Activated T-helper 2 cell treated with anti-CD3 and anti-CD28 coated beads, Interferon-gamma antibody, Interleukin-2, Interleukin-4, amounts not matched to agents 10 μg/mL and 5 μg/mL and 100 μg/mL, durations not matched to agents 14 hours and 24 hours and 36 hours (primary cell): ENCODE measurements at regions of chr7 and their contacts with region 1.

Region 1: GRCh38 chr7:36707465-36707864 is 16.8 kb downstream of the AOAH start:
- DNase-seq: no peak
- H3K4me3 Mint-ChIP-seq: peak overlapping the region; percentile 30
- H3K27ac Mint-ChIP-seq: peak overlapping the region; percentile 97
- H3K4me1 Mint-ChIP-seq: peaks cover 90% of the 10 kb centered on the region
- H3K27me3 Mint-ChIP-seq: no peaks in the 10 kb centered on the region

Region 2: DNA sequence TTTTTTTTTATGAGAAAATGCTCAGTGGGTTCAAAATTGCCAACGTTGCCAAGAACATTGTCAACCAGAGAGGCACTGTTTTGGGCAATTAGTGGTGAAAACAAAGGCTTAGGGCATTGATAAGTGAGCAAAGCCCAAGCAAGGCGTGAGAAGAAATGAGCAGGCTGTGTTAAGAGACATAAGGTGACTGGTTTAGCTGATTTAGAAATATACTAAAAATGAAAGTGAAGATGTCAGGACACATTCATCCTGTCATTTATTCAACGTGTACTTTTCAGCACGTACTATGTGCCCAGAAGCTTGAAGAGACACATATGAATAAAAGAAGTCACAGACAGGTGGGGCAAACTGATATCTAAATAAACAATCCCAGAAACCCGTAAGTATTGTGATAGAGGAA is 15.0 kb before region 1 on chr7:
- intact Hi-C with region 1: loop called (anchors 2 kb)
- DNase-seq: no peak
- H3K4me3 Mint-ChIP-seq: peak overlapping the region; percentile 87
- H3K27ac Mint-ChIP-seq: peak overlapping the region; percentile 99
- H3K4me1 Mint-ChIP-seq: peaks cover 59% of the 10 kb centered on the region
- H3K27me3 Mint-ChIP-seq: no peaks in the 10 kb centered on the region

Region 3: GRCh38 chr7:36794689-36795088 is 87.2 kb after region 1 on chr7:
- intact Hi-C with region 1: no loop called
- DNase-seq: no peak
- H3K4me3 Mint-ChIP-seq: no peak overlapping the region
- H3K27ac Mint-ChIP-seq: no peak overlapping the region
- H3K4me1 Mint-ChIP-seq: peaks cover 33% of the 10 kb centered on the region
- H3K27me3 Mint-ChIP-seq: peaks cover under 1% of the 10 kb centered on the region